K562 (cell line): ENCODE measurements at regions of chr7 and their contacts with region 1.

Region 1: DNA sequence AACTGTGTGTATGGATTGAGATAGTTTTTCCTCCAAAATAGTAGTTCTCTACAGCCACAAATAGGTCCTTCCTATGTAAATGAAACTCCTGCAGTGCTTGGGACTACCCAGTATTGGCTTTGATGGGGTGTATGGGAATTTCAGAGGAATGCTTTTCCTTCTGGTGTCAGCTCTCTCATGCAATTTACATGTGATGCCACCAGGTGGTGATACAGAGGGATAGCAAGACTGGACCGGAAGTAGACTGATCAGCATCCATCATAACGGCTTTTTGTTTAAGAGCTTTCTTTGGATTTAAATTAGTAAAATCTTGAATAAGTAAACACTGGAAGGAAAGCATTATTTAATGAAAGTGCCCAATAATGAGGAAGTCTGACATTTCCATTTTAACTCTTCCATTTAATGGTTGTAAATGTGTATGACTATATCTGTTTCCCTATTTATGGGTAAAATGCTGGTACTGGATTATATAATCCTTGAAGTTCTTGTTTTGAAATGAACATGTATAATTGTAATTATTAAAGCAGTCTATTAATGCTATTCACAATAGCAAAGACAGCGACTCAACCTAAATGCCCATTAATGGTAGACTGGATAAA is 22.7 kb downstream of the DYNC1I1 start:
- DNase-seq: peak; percentile 31 to 70 (median 51)
- ATAC-seq: peak; percentile 79
- H3K4me3 ChIP-seq: no peak overlapping the region
- H3K27ac ChIP-seq: no peak overlapping the region
- H3K4me1 ChIP-seq: no peaks in the 10 kb centered on the region
- H3K27me3 ChIP-seq: no peaks in the 10 kb centered on the region
- CTCF ChIP-seq: peak; percentile 50 to 63 (median 55)
- EP300 ChIP-seq: no peak
- POLR2A ChIP-seq: no peak
- RAD21 ChIP-seq: peak; percentile 34 to 44; a peak in 2 of 4 replicates

Region 2: DNA sequence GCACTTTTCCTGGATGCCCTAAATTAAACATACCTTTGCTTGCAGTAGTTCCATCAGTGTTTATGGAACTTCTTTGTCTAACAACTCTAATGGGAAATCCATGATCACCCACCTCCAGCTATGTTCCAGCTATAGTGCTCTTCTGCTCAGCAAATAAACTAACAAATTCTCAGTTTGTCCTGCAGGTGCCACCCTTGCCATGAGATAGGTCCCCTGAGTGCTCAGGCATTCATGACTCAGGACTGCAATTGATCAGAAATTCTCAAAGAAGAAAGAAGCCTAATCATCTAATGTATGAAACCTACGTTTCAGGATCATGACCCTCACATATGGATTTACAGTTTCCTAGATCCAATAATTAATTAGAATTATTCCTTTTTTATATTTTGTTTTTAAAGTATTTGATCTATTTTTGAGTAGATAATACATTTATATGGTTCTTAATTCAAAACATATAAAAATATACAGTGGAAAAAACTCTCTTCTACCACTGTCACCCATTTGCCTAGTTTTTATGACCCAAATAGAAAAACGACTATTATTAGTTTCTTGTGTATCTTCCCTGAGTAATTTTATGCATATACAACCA is 71.3 kb before region 1 on chr7:
- CTCF ChIA-PET with region 1: interaction called, 5 read pairs
- POLR2A ChIA-PET with region 1: no interaction called
- in situ Hi-C with region 1: no loop called
- intact Hi-C with region 1: loop called (anchors 5 kb)
- DNase-seq: peak; percentile 18 to 49 (median 34)
- ATAC-seq: peak; percentile 82
- H3K4me3 ChIP-seq: no peak overlapping the region
- H3K27ac ChIP-seq: no peak overlapping the region
- H3K4me1 ChIP-seq: no peaks in the 10 kb centered on the region
- H3K27me3 ChIP-seq: peaks cover 4 to 6% of the 10 kb centered on the region in 2 experiments; a peak in 3 of 5 replicates
- CTCF ChIP-seq: peak; percentile 46 to 68 (median 49); a peak in 4 of 6 replicates
- EP300 ChIP-seq: no peak
- POLR2A ChIP-seq: no peak
- RAD21 ChIP-seq: peak; percentile 63 to 71

Region 3: DNA sequence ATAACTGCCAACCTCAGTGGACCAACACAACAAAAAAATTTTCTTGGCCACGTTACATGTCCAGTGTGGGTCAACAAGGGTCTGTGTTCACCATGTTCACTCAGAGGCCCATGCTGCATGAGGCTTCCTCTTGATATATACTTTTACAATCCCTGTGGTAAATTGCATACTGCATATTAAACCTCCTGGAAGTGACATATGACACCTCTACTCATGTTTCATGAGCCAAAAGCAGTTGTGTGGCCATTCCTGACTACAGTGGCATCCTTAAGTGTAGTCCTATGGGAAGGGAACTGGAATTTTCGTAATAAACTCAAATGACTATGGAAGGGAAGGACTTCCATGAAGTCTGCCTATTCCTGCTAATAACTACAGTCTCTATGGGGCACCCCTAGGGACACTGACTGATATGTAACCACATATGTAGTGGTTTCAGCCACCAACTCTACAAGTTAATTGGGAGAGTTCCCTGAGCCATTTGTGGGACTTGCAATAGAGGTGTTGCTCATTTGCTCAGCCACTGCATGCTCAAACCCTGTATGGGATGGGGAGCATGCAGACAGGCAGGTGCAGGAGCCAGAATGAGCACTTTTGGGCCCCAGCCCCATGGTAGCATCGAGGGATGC is 12.9 kb before region 1 on chr7:
- CTCF ChIA-PET with region 1: no interaction called
- POLR2A ChIA-PET with region 1: no interaction called
- in situ Hi-C with region 1: no loop called
- intact Hi-C with region 1: no loop called
- DNase-seq: no peak
- ATAC-seq: no peak
- H3K4me3 ChIP-seq: no peak overlapping the region
- H3K27ac ChIP-seq: no peak overlapping the region
- H3K4me1 ChIP-seq: no peaks in the 10 kb centered on the region
- H3K27me3 ChIP-seq: no peaks in the 10 kb centered on the region; a peak in 1 of 5 replicates
- CTCF ChIP-seq: no peak
- EP300 ChIP-seq: no peak
- POLR2A ChIP-seq: no peak
- RAD21 ChIP-seq: no peak

Region 4: GRCh38 chr7:96211954-96212353 is 416.9 kb after region 1 on chr7:
- CTCF ChIA-PET with region 1: no interaction called
- POLR2A ChIA-PET with region 1: no interaction called
- in situ Hi-C with region 1: no loop called
- intact Hi-C with region 1: no loop called
- DNase-seq: no peak
- ATAC-seq: peak; percentile 56
- H3K4me3 ChIP-seq: no peak overlapping the region
- H3K27ac ChIP-seq: no peak overlapping the region
- H3K4me1 ChIP-seq: peaks cover 0 to 2% of the 10 kb centered on the region in 2 experiments; a peak in 2 of 5 replicates
- H3K27me3 ChIP-seq: no peaks in the 10 kb centered on the region
- CTCF ChIP-seq: no peak
- EP300 ChIP-seq: no peak
- POLR2A ChIP-seq: no peak
- RAD21 ChIP-seq: no peak

Region 5: DNA sequence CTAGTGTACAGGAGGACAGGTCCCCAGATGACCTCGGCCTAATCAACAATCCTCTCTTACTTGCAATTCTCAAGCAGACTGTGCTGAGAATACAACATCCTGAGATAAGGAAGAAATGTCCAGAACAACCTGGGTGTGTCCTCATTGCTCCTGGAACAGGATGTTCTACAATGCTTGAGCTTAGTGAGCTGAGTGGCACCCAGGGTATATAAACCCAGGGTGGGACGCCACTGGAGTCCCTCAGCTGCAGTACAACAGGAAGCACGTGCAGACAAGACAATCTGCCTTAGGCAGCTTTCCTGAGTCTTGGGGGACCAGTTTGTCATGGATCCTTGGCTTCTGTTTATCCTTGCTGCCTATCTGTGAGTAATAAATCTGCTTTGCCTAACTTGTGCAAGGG is 554.6 kb after region 1 on chr7:
- CTCF ChIA-PET with region 1: no interaction called
- POLR2A ChIA-PET with region 1: no interaction called
- in situ Hi-C with region 1: no loop called
- intact Hi-C with region 1: no loop called
- DNase-seq: peak in 1 of 4 experiments; percentile 22
- ATAC-seq: peak; percentile 74
- H3K4me3 ChIP-seq: no peak overlapping the region
- H3K27ac ChIP-seq: no peak overlapping the region
- H3K4me1 ChIP-seq: no peaks in the 10 kb centered on the region; a peak in 1 of 5 replicates
- H3K27me3 ChIP-seq: peaks cover 2 to 9% of the 10 kb centered on the region in 2 experiments; a peak in 2 of 5 replicates
- CTCF ChIP-seq: no peak
- EP300 ChIP-seq: 0 out of 2 replicates have a peak, but pooled peaks have one; percentile 51
- POLR2A ChIP-seq: no peak
- RAD21 ChIP-seq: no peak